ENCODE measurements at regions of chr2 and their contacts with region 1.

Region 1: GRCh38 chr2:55168221-55169154 is 63.6 kb downstream of the CLHC1 start:
- DNase-seq: no peak
- H3K4me3 ChIP-seq: no peak overlapping the region
- H3K27ac ChIP-seq: no peak overlapping the region
- H3K4me1 ChIP-seq: peaks cover 0 to 15% (median 4%) of the 10 kb centered on the region in 4 experiments; a peak in 3 of 7 replicates
- H3K27me3 ChIP-seq: no peaks in the 10 kb centered on the region
- CTCF ChIP-seq: peak in 2 of 3 experiments; percentile 65 to 77; a peak in 3 of 4 replicates
- EP300 ChIP-seq: no peak
- POLR2A ChIP-seq: no peak
- RAD21 ChIP-seq: peak; percentile 90 to 91

Region 2: DNA sequence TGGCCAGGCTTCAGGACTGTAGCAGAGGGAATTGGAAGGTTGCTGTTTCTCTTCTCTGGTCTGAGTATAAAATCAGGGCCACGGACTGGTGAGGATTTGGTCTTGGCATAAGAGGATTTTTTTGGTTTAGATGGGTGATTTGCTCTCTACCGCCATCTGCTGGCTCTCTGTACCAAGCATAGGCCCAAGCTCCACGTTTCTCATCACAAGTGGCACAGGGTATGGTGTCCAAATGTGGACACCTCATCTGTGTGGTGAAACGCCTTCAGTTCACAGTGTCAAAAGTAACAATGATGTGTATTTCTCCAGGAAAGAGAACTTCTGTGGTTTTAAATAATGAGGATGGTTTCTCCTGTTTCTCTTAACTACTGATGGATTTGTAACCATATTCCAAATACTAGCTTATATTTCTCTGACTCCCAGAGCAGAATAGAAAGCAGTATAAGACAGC is 329.9 kb before region 1 on chr2:
- CTCF ChIA-PET with region 1: interaction called, 10 read pairs
- POLR2A ChIA-PET with region 1: no interaction called
- DNase-seq: peak; percentile 27 to 81
- H3K4me3 ChIP-seq: no peak overlapping the region
- H3K27ac ChIP-seq: no peak overlapping the region
- H3K4me1 ChIP-seq: no peaks in the 10 kb centered on the region
- H3K27me3 ChIP-seq: no peaks in the 10 kb centered on the region; a peak in 2 of 7 replicates
- CTCF ChIP-seq: peak; percentile 69 to 88 (median 78)
- EP300 ChIP-seq: no peak
- POLR2A ChIP-seq: no peak
- RAD21 ChIP-seq: peak; percentile 68 to 76

Region 3: DNA sequence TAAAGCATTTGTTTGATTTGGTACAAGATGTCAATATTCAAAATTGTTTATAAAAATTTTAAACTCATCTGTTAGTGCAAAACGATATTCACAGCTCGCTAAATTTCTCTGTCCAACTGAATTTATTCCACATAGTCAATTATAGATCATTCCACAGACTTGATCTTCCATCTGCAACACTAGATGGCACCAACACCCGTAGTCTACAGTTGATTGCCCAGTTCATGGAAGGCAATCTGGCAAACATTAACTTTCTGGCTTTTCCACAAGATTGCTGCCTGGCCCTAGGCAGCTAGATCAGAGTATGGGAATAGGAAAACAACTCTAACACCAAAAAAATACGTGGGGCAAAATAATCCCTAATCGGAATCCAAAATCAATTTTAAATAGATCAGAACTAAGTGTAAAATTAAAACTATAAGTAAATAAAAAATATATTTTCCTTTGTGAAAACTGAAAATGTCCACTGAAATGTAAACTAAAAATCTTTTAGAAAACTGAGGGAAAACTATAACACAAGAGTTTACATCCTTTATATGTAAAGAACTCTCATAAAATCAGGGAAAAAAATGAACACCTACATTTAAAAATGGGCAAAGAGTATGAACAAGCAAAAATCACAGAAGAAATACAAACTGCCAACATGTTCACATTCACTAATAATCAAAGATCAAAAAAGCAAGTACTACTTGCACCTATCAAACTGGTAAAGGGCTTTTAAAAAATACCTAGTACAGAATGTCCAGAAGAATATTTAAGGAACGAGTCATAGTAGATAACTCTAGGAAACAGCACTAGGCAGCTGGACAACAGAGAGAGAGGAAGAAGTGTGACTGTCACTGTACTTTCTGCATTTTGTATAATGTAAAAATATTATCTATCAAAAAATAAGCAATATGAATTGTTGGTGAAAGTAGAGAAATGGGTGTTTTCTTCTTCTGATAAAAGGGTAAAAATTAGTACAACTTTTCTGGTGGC is 153.2 kb before region 1 on chr2:
- CTCF ChIA-PET with region 1: interaction called, 20 read pairs
- POLR2A ChIA-PET with region 1: no interaction called
- DNase-seq: no peak
- H3K4me3 ChIP-seq: no peak overlapping the region
- H3K27ac ChIP-seq: no peak overlapping the region
- H3K4me1 ChIP-seq: peaks cover 0 to 7% (median 3%) of the 10 kb centered on the region in 4 experiments; a peak in 3 of 7 replicates
- H3K27me3 ChIP-seq: no peaks in the 10 kb centered on the region
- CTCF ChIP-seq: peak in 2 of 3 experiments; percentile 60 to 62; a peak in 3 of 4 replicates
- EP300 ChIP-seq: no peak
- POLR2A ChIP-seq: no peak
- RAD21 ChIP-seq: peak; percentile 69 to 82

Region 4: DNA sequence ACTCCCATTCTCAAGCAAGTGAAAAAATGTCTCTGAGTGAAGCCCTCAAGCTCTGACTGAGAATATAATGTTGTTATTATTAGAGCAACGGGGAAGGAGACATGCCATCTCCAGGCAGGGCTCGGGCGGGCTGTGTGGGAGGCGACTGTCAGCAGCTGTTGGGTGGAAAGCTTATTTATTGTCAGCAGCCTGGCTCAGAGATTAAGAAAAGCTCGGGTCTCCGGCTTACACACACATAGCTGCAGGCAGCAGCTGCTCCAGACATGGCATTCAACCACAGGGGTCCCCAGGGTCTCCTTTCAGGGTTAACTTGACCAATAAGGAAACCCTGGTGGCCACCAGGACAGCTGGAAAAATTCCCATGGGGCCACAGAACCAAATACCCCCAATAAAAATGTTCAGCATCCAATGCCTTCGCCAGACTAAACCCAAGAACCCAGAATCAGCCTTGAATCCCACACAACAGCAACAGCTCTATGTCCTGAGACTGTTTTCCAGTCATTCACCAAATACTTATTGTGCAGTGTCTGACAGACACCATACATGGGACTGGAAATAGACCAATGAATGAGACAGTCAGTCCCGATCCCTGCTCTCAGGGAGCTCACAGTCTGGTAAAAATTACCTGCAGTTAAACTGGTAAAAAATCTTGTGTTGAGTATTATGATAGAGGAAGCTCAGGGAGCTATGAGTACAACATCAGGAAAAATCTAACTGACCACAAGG is 47.7 kb before region 1 on chr2:
- CTCF ChIA-PET with region 1: interaction called, 10 read pairs
- POLR2A ChIA-PET with region 1: no interaction called
- DNase-seq: no peak
- H3K4me3 ChIP-seq: no peak overlapping the region
- H3K27ac ChIP-seq: no peak overlapping the region
- H3K4me1 ChIP-seq: peaks cover 2 to 9% (median 6%) of the 10 kb centered on the region in 4 experiments; a peak in 5 of 7 replicates
- H3K27me3 ChIP-seq: no peaks in the 10 kb centered on the region
- CTCF ChIP-seq: no peak
- EP300 ChIP-seq: no peak
- POLR2A ChIP-seq: no peak
- RAD21 ChIP-seq: no peak

Region 5: GRCh38 chr2:55153584-55154295 is 14.7 kb before region 1 on chr2:
- CTCF ChIA-PET with region 1: interaction called, 18 read pairs
- POLR2A ChIA-PET with region 1: no interaction called
- DNase-seq: no peak
- H3K4me3 ChIP-seq: no peak overlapping the region
- H3K27ac ChIP-seq: no peak overlapping the region
- H3K4me1 ChIP-seq: peaks cover 0 to 13% (median 0%) of the 10 kb centered on the region in 4 experiments; a peak in 2 of 7 replicates
- H3K27me3 ChIP-seq: no peaks in the 10 kb centered on the region
- CTCF ChIP-seq: no peak
- EP300 ChIP-seq: no peak
- POLR2A ChIP-seq: no peak
- RAD21 ChIP-seq: no peak

Measured in H1 (cell line).